ENCODE measurements at regions of chr15 and their contacts with region 1.

Region 1: GRCh38 chr15:31352911-31353811 is 26.5 kb downstream of the KLF13 start:
- DNase-seq: no peak
- H3K4me3 Mint-ChIP-seq: peak overlapping the region; percentile 66
- H3K27ac Mint-ChIP-seq: peak overlapping the region; percentile 93
- H3K4me1 Mint-ChIP-seq: peaks cover 98% of the 10 kb centered on the region
- H3K27me3 Mint-ChIP-seq: no peaks in the 10 kb centered on the region

Region 2: DNA sequence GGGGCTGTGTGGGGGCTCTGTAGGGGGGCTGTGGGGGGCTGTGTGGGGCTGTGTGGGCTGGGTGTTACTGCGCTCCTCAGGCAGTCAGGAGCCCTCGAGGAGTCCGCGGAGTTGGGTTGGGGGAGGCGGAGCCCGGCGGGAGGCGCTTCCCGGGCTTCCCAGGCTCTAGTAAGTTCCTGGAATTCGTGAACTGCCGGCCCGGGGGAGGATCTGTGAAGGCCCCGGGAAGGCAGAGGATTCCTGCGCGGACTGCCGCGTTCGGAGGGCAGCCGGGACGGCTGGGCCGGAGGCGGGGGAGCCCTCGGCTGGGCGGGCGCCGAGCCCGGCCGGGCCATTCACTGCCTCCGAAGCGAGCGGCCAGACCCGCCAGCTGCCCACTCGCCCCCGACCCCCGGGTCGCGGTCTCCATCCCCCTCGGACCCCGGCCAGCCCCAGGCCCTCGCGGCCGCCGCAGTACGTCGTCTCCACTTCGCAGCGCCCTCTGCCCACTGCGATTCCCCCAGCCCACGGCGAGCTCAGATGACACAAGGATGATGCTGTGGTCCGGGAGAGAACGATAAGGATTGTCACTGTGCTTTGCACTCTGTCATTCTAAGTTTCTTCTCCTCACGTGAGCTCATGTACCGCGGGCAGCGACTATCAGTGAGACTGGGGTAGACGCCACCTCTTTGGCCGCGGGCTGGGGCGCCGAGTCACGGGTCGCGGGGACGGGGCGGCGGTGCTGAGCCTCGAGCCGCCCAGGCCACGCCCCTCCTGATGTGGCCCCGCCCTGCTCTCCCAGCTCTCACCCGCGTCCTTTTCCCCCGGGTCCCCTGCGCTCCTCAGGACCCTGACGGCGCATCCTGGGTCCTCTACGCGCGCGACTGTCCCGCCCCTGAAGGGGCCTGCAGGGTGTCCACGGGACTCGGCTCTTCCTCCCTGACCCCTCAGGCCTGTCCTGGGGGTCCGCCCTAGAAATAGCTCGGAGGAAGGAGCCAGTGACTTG is 38.8 kb after region 1 on chr15:
- CTCF ChIA-PET with region 1: no interaction called
- POLR2A ChIA-PET with region 1: interaction called, 10 read pairs
- DNase-seq: peak; percentile 87
- H3K4me3 Mint-ChIP-seq: peak overlapping the region; percentile 88
- H3K27ac Mint-ChIP-seq: peak overlapping the region; percentile 80
- H3K4me1 Mint-ChIP-seq: peaks cover 49% of the 10 kb centered on the region
- H3K27me3 Mint-ChIP-seq: no peaks in the 10 kb centered on the region

Region 3: DNA sequence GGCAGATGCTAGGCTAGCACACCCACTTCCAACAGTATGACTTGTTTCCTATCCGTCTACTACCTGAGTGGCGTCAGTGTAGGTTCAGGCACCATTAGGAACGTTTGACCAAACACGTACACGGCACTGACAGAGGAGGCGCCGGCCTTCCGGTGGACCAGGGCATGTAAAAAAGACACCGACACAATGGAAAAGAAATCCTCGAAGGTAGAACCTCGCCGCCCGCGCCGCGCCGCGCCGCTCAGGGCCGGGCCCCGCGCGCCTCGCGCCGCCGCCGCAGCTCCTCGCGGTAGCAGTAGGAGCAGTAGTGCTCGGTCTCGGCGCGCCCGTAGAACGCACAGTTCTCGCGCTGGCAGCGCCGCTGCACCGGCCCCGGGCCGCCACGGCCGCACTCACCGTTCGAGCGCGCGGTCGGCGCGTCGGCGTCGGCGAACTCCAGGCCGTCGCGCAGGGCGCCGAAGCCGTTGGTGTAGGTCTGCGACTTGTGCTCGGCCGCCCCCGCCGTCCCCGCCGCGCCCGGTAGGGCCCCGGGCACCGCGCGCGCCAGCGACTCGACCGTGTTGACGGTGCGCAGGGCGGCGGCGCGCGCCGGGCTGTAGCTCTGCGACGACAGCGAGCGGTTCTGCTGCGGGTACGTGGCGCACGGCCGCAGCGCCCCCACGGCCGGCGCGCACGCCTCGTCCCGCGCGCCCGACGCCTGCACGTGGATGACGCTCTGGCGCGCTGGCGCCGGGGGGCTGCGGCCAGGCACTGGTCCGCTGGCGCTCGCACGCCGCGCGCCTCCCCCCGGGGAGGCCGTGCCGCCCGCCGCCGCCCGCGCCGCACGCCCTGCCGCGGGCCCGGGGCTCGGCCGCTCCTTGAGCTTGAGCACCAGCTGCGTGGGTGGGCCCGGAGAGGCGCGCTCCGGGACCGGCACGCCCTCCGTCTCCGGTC is 130.2 kb after region 1 on chr15:
- CTCF ChIA-PET with region 1: interaction called, 128 read pairs
- POLR2A ChIA-PET with region 1: interaction called, 10 read pairs
- DNase-seq: peak; percentile 64
- H3K4me3 Mint-ChIP-seq: peak overlapping the region; percentile 86
- H3K27ac Mint-ChIP-seq: peak overlapping the region; percentile 86
- H3K4me1 Mint-ChIP-seq: peaks cover 63% of the 10 kb centered on the region
- H3K27me3 Mint-ChIP-seq: peaks cover 7% of the 10 kb centered on the region

Measured in activated CD4-positive, alpha-beta memory T cell treated with anti-CD3 and anti-CD28 coated beads, Interleukin-2, amount 10 ng/mL, durations not matched to agents 7 days and 5 days (primary cell).